MCF 10A (cell line): ENCODE measurements at regions of chrX and their contacts with region 1.

Region 1: DNA sequence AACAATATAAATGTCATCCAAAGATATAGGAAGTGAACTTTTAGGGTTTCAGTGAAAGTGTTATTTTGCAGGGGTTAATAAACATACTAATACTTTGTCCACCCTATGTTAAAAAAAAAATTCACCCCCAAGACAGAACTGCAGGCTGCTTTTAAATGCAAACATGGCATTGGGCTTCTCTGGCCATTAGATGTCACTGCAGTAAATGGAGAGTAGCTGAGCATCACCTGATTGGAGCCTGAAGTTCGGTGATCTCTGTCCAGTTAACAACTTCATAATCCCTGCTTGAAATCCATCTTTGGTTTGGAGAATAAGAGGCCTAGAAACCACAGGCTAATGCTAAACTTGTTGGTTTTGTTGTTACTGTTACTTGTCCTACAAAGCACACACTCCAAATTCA is 18.7 kb downstream of the SLC25A43 start:
- DNase-seq: peak; percentile 16
- H3K4me3 Mint-ChIP-seq: no peak overlapping the region
- H3K27ac Mint-ChIP-seq: no peak overlapping the region
- H3K4me1 Mint-ChIP-seq: no peaks in the 10 kb centered on the region
- H3K27me3 Mint-ChIP-seq: peaks cover 12% of the 10 kb centered on the region
- CTCF ChIP-seq: no peak

Region 2: DNA sequence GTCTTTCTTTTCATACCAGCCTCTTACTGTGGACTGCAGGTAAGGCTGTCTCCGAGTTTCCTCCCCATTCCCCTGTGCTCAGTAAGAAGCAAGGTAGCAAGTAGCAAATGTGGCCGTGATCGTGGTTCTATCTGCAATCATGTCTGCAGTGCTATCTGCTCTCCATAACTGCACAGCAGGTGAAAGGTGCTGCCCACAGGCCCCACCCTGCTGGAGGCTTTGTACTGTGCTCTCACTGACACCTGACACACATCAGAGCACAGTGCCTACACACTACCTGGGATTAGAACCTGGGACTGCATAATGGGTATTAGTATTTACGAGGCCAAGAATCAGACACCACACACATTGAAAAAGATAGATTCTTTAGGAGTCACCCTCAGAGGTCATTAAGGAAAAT is 166.5 kb before region 1 on chrX:
- CTCF ChIA-PET with region 1: no interaction called
- POLR2A ChIA-PET with region 1: no interaction called
- intact Hi-C with region 1: no loop called
- DNase-seq: no peak
- H3K4me3 Mint-ChIP-seq: no peak overlapping the region
- H3K27ac Mint-ChIP-seq: no peak overlapping the region
- H3K4me1 Mint-ChIP-seq: no peaks in the 10 kb centered on the region
- H3K27me3 Mint-ChIP-seq: peaks cover 21% of the 10 kb centered on the region
- CTCF ChIP-seq: no peak

Region 3: DNA sequence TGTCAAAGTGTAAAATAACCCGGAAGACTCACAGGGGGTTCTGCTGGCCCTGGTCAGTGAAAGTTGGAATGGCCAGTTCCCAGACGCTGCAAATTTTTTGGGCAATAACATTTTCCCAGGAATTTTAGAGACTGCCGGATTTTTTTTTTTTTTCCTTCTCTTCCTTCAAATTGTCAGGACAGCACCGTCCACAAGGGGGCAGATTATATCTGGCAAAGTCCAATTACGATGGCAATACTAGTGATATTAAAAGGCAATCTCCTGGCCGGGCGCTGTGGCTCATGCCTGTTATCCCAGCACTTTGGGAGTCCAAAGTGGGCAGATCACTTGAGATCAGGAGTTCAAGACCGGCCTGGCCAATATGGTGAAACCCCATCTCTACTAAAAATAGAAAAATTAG is 70.9 kb after region 1 on chrX:
- CTCF ChIA-PET with region 1: interaction called, 15 read pairs
- POLR2A ChIA-PET with region 1: no interaction called
- intact Hi-C with region 1: no loop called
- DNase-seq: peak; percentile 72
- H3K4me3 Mint-ChIP-seq: no peak overlapping the region
- H3K27ac Mint-ChIP-seq: no peak overlapping the region
- H3K4me1 Mint-ChIP-seq: no peaks in the 10 kb centered on the region
- H3K27me3 Mint-ChIP-seq: no peaks in the 10 kb centered on the region
- CTCF ChIP-seq: peak; percentile 53